Prostate gland (tissue), 2 donors: ENCODE measurements at regions of chr9 and their contacts with region 1.

Region 1: GRCh38 chr9:130870491-130871381 is 25.9 kb downstream of the QRFP start:
- DNase-seq: no peak
- H3K4me3 ChIP-seq: no peak overlapping the region
- H3K27ac ChIP-seq: no peak overlapping the region
- H3K4me1 ChIP-seq: peaks cover 20% of the 10 kb centered on the region
- H3K27me3 ChIP-seq: no peaks in the 10 kb centered on the region
- CTCF ChIP-seq: no peak
- POLR2A ChIP-seq: no peak

Region 2: DNA sequence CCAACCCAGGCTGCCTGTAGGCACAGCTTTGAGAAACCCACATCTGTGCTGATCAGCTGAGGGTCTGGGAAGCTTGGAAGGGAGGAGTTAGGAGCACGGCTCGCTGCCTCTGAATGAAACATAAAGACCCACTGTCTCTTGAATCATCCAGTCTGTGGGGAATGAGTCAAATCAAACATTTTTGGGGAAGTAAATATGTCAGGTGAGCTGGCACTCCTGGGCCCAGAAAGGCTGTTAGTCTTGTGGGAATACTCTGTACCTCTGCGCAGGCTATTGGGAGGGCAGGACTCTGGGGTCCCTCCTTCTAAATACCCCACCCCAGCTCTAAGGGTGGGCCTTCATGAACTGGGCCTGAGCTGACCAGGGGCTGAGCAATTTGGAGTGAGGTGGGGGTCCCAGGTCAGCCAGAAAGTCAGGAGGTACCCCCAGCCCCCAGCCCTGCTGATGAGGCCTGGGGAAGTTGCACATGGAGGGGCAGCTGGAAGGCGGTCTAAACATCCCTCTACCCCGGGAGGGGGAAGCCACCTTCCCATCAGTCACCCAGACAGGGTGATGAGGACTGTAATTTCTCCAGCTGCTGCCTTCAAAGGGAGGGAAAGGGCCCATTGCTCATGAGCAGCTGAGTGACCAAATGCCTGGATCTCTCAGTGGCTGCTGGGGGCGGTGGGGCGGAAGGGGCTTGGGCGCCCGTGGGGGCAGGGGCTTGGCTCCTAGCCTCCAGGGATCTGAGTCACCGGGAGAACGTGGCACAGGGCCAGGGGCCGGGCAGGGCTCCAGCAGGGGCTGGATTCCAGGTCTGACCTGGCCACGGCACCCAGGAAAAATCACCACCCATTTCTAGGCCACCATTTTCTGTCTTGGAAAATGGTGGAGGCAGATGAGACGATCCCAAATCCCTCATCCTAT is 57.5 kb after region 1 on chr9:
- intact Hi-C with region 1: no loop called
- DNase-seq: peak; percentile 34
- H3K4me3 ChIP-seq: no peak overlapping the region
- H3K27ac ChIP-seq: no peak overlapping the region
- H3K4me1 ChIP-seq: peaks cover 4% of the 10 kb centered on the region
- H3K27me3 ChIP-seq: no peaks in the 10 kb centered on the region
- CTCF ChIP-seq: no peak
- POLR2A ChIP-seq: no peak

Region 3: GRCh38 chr9:130940693-130941576 is 70.2 kb after region 1 on chr9:
- intact Hi-C with region 1: loop called (anchors 2 kb)
- DNase-seq: peak; percentile 84
- H3K4me3 ChIP-seq: no peak overlapping the region
- H3K27ac ChIP-seq: no peak overlapping the region
- H3K4me1 ChIP-seq: peaks cover 7% of the 10 kb centered on the region
- H3K27me3 ChIP-seq: no peaks in the 10 kb centered on the region
- CTCF ChIP-seq: peak; percentile 52 to 94 (median 88)
- POLR2A ChIP-seq: no peak